ENCODE measurements at regions of chr4 and their contacts with region 1.

Region 1: GRCh38 chr4:183716302-183716701 is 57.2 kb downstream of the TRAPPC11 start:
- DNase-seq: no peak
- H3K4me3 ChIP-seq: no peak overlapping the region
- H3K27ac ChIP-seq: no peak overlapping the region
- H3K4me1 ChIP-seq: no peaks in the 10 kb centered on the region
- H3K27me3 ChIP-seq: no peaks in the 10 kb centered on the region
- CTCF ChIP-seq: no peak
- POLR2A ChIP-seq: no peak

Region 2: DNA sequence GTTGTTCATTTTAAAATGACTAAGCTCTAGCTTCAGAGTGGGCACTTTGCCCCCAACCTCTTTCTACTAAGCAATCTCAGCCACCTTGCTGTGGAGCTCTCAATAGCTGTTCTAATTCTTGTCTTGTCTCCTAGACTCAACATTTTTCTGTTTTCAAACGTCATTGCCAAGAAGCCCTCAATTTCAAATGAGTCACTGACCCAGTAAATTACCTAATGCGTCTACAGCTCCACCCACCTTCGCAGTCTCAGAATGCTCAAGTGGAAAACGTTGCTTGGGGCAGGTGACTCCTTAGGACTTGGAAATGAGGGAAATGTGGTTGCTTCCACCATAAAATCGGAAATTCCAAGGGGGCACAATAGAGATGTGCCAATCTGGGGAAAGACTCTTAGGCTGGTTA is 152.4 kb before region 1 on chr4:
- intact Hi-C with region 1: no loop called
- DNase-seq: no peak
- H3K4me3 ChIP-seq: no peak overlapping the region
- H3K27ac ChIP-seq: no peak overlapping the region
- H3K4me1 ChIP-seq: no peaks in the 10 kb centered on the region
- H3K27me3 ChIP-seq: no peaks in the 10 kb centered on the region
- CTCF ChIP-seq: no peak
- POLR2A ChIP-seq: no peak

Region 3: DNA sequence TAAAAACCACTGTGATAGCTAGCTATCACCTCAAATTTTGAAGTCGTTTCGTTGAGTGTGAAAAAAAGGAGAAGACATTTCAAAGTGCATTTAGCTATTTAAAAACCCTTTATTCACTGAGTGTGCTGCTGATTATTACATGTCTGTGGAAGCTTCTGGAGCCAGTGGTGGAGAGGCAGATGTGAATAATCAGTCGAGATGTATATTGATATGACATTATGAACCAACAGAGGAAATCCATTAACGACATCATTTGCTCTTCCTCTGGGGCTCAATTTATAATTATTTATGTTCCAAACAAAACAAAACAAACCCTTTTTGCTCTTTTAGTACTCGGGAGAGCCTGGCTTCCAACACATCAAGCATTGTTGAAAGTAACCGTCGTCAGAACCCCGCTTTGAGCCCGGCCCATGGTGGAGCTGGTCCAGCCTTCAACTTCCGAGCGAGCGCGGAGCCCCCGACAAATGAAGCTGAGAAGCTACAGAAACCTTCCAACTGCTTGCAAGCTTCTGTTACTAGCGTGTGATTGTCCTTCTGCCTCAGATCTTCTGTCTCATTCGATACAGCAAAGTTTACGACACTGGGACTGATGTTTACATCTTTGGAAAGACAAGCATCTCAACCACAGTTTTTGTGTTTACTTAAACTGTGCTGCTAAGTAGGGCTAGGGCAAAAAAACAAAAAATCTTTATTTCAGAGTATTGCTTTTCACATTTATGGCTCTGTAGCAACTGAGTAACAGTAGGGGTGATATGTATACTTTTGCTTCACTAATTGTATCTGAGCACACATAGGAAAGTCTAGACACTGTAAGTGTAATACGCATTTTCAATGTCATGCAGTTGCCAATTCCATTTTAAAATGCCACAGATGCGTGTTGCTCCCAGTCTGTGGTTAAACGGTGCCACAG is 300.7 kb after region 1 on chr4:
- intact Hi-C with region 1: loop called (anchors 5 kb)
- DNase-seq: no peak
- H3K4me3 ChIP-seq: peak overlapping the region in 1 of 2 donors; percentile 28
- H3K27ac ChIP-seq: no peak overlapping the region
- H3K4me1 ChIP-seq: no peaks in the 10 kb centered on the region
- H3K27me3 ChIP-seq: no peaks in the 10 kb centered on the region
- CTCF ChIP-seq: no peak
- POLR2A ChIP-seq: no peak